ENCODE measurements at regions of chr3 and their contacts with region 1.

Region 1: DNA sequence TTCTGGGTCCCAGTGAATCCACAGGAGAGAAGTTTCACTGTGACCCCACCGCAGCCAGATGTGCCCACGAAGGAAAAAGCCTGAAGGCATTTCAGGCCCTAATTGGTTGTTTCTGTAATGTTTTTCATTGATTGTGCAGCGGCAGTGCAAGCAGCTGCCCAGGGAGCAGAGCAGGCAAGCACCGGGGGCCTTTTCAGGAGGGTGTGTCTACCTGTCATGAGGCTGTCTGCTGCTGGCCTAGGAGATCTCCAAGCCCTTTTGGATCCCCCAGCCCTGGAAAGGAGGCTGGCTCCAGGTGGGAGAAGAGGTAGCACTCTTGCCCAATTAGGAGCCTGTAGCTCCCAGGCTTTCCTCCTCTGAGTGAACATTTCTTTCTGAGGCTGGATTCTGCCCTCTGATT is 108.8 kb downstream of the EPHB1 start:
- DNase-seq: no peak
- H3K4me3 ChIP-seq: no peak overlapping the region
- H3K27ac ChIP-seq: no peak overlapping the region
- H3K4me1 ChIP-seq: peaks cover 0 to 6% (median 0%) of the 10 kb centered on the region in 4 donors
- H3K27me3 ChIP-seq: no peaks in the 10 kb centered on the region
- CTCF ChIP-seq: no peak
- EP300 ChIP-seq: no peak
- POLR2A ChIP-seq: no peak

Region 2: GRCh38 chr3:134794950-134795745 is 108.7 kb before region 1 on chr3 and contains the start of gene EPHB1:
- in situ Hi-C with region 1: no loop called
- intact Hi-C with region 1: no loop called
- DNase-seq: peak; percentile 70
- H3K4me3 ChIP-seq: peak within 1 kb of the TSS; percentile 17 to 54 (median 26)
- H3K27ac ChIP-seq: peak within 1 kb of the TSS in 2 of 4 donors; percentile 28 to 75
- H3K4me1 ChIP-seq: peaks cover 0 to 18% (median 13%) of the 10 kb centered on the region in 4 donors
- H3K27me3 ChIP-seq: peaks cover 32% of the 10 kb centered on the region
- CTCF ChIP-seq: peak; percentile 76 to 86 (median 78)
- EP300 ChIP-seq: no peak
- POLR2A ChIP-seq: no peak
- total RNA-seq, gene EPHB1: 0.82 to 2.2 (median 1.2) TPM

Region 3: GRCh38 chr3:134978658-134979057 is 74.8 kb after region 1 on chr3:
- in situ Hi-C with region 1: no loop called
- intact Hi-C with region 1: loop called (anchors 2 kb)
- DNase-seq: no peak
- H3K4me3 ChIP-seq: no peak overlapping the region
- H3K27ac ChIP-seq: no peak overlapping the region
- H3K4me1 ChIP-seq: no peaks in the 10 kb centered on the region
- H3K27me3 ChIP-seq: no peaks in the 10 kb centered on the region
- CTCF ChIP-seq: no peak
- EP300 ChIP-seq: no peak
- POLR2A ChIP-seq: no peak